Psoas muscle (tissue), 8 donors: ENCODE measurements at regions of chr11 and their contacts with region 1.

Region 1: GRCh38 chr11:73218106-73218829 is at the start of gene P2RY2:
- DNase-seq: peak; percentile 91 to 95
- ATAC-seq: peak; percentile 77 to 81 (median 80)
- H3K4me3 ChIP-seq: peak within 1 kb of the TSS; percentile 82
- H3K27ac ChIP-seq: peak within 1 kb of the TSS; percentile 95
- H3K4me1 ChIP-seq: peaks cover 73% of the 10 kb centered on the region
- H3K27me3 ChIP-seq: no peaks in the 10 kb centered on the region
- CTCF ChIP-seq: peak; percentile 52
- total RNA-seq, gene P2RY2: 18.7 to 90.9 (median 43.8) TPM

Region 2: GRCh38 chr11:73126804-73127480 is 91.3 kb before region 1 on chr11:
- intact Hi-C with region 1: no loop called
- DNase-seq: no peak
- ATAC-seq: no peak
- H3K4me3 ChIP-seq: no peak overlapping the region
- H3K27ac ChIP-seq: no peak overlapping the region
- H3K4me1 ChIP-seq: no peaks in the 10 kb centered on the region
- H3K27me3 ChIP-seq: no peaks in the 10 kb centered on the region
- CTCF ChIP-seq: no peak

Region 3: GRCh38 chr11:73236854-73237253 is 18.6 kb after region 1 on chr11:
- intact Hi-C with region 1: loop called (anchors 2 kb)
- DNase-seq: peak; percentile 71 to 84
- ATAC-seq: peak; percentile 46 to 60 (median 52)
- H3K4me3 ChIP-seq: no peak overlapping the region
- H3K27ac ChIP-seq: peak overlapping the region; percentile 90
- H3K4me1 ChIP-seq: peaks cover 67% of the 10 kb centered on the region
- H3K27me3 ChIP-seq: no peaks in the 10 kb centered on the region
- CTCF ChIP-seq: peak; percentile 65